Left ventricle myocardium inferior (tissue), 1 donor: ENCODE measurements at regions of chr11 and their contacts with region 1.

Region 1: GRCh38 chr11:64207256-64208085 is 950 bp downstream of the FERMT3 start:
- DNase-seq: peak; percentile 69
- H3K4me3 ChIP-seq: peak overlapping the region; percentile 58
- H3K27ac ChIP-seq: peak overlapping the region; percentile 88
- H3K4me1 ChIP-seq: peaks cover 54% of the 10 kb centered on the region
- H3K27me3 ChIP-seq: no peaks in the 10 kb centered on the region
- CTCF ChIP-seq: no peak

Region 2: GRCh38 chr11:64304316-64305072 is 97.0 kb after region 1 on chr11:
- intact Hi-C with region 1: loop called (anchors 5 kb)
- DNase-seq: peak; percentile 95
- H3K4me3 ChIP-seq: peak overlapping the region; percentile 77
- H3K27ac ChIP-seq: peak overlapping the region; percentile 99
- H3K4me1 ChIP-seq: peaks cover 57% of the 10 kb centered on the region
- H3K27me3 ChIP-seq: peaks cover 13% of the 10 kb centered on the region
- CTCF ChIP-seq: peak; percentile 93